Activated CD4-positive, alpha-beta T cell treated with anti-CD3 and anti-CD28 coated beads, Interleukin-2, amount 10 ng/mL, durations not matched to agents 24 days and 14 days (primary cell): ENCODE measurements at regions of chr5 and their contacts with region 1.

Region 1: DNA sequence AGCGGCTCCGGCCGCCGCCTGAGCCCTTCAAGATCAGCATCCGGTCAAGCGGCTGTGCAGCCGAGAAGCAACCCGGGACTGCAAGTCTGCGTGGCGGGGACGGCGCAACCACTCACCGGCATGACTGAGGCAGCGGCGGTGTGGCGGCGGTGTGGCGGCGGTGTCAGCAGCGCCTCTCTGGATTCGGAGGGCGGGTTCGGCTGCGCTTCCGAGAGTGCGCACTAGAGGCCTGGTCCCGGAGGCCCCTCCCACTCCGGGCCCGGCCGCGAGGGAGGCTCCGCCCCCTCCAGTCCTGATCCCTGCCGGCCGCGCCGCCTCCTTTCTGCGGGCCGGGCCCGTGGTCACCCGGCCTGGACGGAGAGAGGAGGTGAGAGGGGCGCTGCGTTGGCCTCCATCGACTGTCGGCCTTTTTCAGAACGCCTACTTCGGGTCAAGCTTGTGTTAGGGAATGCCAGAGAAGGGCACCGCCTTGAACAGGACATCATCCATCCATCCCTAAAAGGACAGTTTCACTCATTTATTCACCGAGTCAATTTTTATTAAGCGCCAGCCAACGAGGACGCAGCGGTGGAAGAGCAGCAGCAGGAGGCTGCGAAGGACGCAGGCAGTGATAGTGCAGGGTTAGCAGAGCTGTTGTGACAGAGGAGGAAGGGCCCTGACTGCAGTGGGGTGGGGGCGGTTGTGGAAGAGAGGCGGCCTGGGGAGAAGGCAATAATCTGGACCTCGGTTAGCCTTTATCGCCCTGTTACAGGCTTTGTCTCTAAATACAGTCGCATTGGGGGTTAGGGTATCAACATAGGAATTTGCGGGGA is at the start of gene ATOX1:
- DNase-seq: peak; percentile 98
- H3K4me3 Mint-ChIP-seq: peak within 1 kb of the TSS; percentile 98
- H3K27ac Mint-ChIP-seq: peak within 1 kb of the TSS; percentile 98
- H3K4me1 Mint-ChIP-seq: peaks cover 28% of the 10 kb centered on the region
- H3K27me3 Mint-ChIP-seq: no peaks in the 10 kb centered on the region
- total RNA-seq, gene ATOX1: 75.6 and 78.4 TPM in 2 replicates

Region 2: GRCh38 chr5:151740336-151740942 is 18.2 kb before region 1 on chr5:
- intact Hi-C with region 1: loop called (anchors 1 kb)
- DNase-seq: peak; percentile 86
- H3K4me3 Mint-ChIP-seq: no peak overlapping the region
- H3K27ac Mint-ChIP-seq: no peak overlapping the region
- H3K4me1 Mint-ChIP-seq: peaks cover 19% of the 10 kb centered on the region
- H3K27me3 Mint-ChIP-seq: no peaks in the 10 kb centered on the region

Region 3: GRCh38 chr5:151771259-151772028 is 12.8 kb after region 1 on chr5 and contains the start of gene G3BP1:
- intact Hi-C with region 1: loop called (anchors 1 kb)
- DNase-seq: peak; percentile 100
- H3K4me3 Mint-ChIP-seq: peak within 1 kb of the TSS; percentile 98
- H3K27ac Mint-ChIP-seq: peak within 1 kb of the TSS; percentile 92
- H3K4me1 Mint-ChIP-seq: peaks cover 30% of the 10 kb centered on the region
- H3K27me3 Mint-ChIP-seq: no peaks in the 10 kb centered on the region
- total RNA-seq, gene G3BP1: 362 and 367 TPM in 2 replicates